ENCODE measurements at regions of chr12 and their contacts with region 1.

Region 1: DNA sequence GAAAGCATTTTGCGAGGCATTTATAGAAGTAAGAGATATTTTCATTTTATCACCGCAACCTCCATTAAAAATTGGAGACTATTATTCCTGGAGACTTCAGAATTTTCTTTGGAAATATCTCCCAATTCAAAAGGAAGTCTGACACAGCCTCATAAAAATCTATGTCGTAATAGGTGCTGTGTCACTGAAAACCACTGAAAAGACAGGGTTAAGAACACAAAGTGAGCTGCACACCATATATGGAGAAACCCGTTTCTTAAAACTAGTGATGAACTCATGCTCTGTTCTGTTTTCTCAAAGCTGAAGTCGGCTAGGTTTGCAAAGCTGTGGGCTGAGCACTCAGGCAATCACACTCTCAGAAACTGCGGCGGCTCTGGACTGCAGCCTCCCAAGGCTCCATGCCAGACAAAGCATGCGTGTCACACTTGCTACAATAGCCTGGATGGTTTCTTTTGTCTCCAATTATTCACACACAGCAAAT is at the start of gene GLIPR1:
- DNase-seq: peak; percentile 93
- H3K4me3 ChIP-seq: peak within 1 kb of the TSS; percentile 37 to 79 (median 47)
- H3K27ac ChIP-seq: peak within 1 kb of the TSS; percentile 80
- H3K4me1 ChIP-seq: peaks cover 29% of the 10 kb centered on the region
- H3K27me3 ChIP-seq: no peaks in the 10 kb centered on the region
- CTCF ChIP-seq: no peak
- POLR2A ChIP-seq: peak; percentile 96
- total RNA-seq, gene GLIPR1: 74.1 and 98.8 TPM in 2 replicates

Region 2: DNA sequence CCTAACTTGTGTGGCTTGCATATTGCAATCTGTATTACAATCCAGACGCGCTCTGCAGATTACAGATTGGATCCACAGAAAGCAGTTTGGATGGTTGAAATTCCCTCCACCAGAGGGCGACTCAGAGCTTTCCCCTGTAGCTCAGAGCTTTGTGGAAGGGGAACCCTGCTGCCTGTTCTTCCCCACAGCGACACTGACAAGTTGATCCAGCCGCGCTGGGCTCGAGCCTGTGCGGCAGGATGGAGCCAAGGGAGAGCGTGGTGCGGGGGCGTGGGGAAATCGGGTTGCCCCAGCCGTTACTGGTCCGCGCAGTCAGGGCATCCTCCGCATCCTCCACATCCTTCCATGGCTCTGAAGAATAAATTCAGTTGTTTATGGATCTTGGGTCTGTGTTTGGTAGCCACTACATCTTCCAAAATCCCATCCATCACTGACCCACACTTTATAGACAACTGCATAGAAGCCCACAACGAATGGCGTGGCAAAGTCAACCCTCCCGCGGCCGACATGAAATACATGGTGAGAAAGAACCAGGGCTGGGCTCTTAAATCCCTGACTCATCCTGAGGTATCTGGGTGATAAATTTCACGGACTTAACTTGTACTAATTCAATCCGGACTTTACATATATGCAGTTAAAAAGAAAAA is 146.0 kb before region 1 on chr12 and contains the start of gene GLIPR1L1:
- CTCF ChIA-PET with region 1: interaction called, 25 read pairs
- POLR2A ChIA-PET with region 1: no interaction called
- dilution Hi-C with region 1: no loop called
- intact Hi-C with region 1: loop called (anchors 1 kb)
- DNase-seq: peak; percentile 88
- H3K4me3 ChIP-seq: peak within 1 kb of the TSS; percentile 20 to 58 (median 56)
- H3K27ac ChIP-seq: no peak within 1 kb of the TSS
- H3K4me1 ChIP-seq: peaks cover 10% of the 10 kb centered on the region
- H3K27me3 ChIP-seq: peaks cover 2 to 13% of the 10 kb centered on the region in 2 experiments
- CTCF ChIP-seq: peak; percentile 85 to 91
- POLR2A ChIP-seq: no peak
- total RNA-seq, gene GLIPR1L1: not detected in 2 replicates

Region 3: GRCh38 chr12:75390899-75391538 is 89.5 kb before region 1 on chr12 and contains the start of gene GLIPR1L2:
- CTCF ChIA-PET with region 1: interaction called, 24 read pairs
- POLR2A ChIA-PET with region 1: interaction called, 7 read pairs
- dilution Hi-C with region 1: no loop called
- intact Hi-C with region 1: loop called (anchors 1 kb)
- DNase-seq: peak; percentile 98
- H3K4me3 ChIP-seq: peak within 1 kb of the TSS; percentile 2 to 63 (median 50)
- H3K27ac ChIP-seq: peak within 1 kb of the TSS; percentile 31
- H3K4me1 ChIP-seq: peaks cover 29% of the 10 kb centered on the region
- H3K27me3 ChIP-seq: no peaks in the 10 kb centered on the region
- CTCF ChIP-seq: peak; percentile 89 to 94
- POLR2A ChIP-seq: no peak
- total RNA-seq, gene GLIPR1L2: not detected in 2 replicates

Region 4: DNA sequence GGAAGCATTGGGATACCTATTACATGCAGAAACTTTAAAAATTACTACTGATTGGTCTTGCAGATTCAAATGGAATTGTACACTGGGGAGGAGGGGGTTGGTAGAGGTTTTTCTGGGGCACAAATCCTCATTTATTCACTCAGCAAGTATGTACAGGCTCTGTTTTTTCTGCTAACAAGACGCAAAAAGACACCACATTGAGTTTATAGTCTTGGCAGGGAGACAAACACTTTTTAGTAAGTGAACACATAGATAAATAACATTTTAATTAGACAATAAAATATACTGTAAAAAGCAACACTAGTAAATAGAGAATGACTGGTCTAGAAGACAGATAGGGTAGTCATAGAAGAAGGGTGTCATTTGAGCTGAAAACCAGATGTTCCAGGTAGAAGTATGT is 65.8 kb before region 1 on chr12:
- CTCF ChIA-PET with region 1: no interaction called
- POLR2A ChIA-PET with region 1: no interaction called
- dilution Hi-C with region 1: no loop called
- intact Hi-C with region 1: no loop called
- DNase-seq: no peak
- H3K4me3 ChIP-seq: no peak overlapping the region
- H3K27ac ChIP-seq: no peak overlapping the region
- H3K4me1 ChIP-seq: no peaks in the 10 kb centered on the region
- H3K27me3 ChIP-seq: peaks cover 0 to 2% of the 10 kb centered on the region in 2 experiments
- CTCF ChIP-seq: no peak
- POLR2A ChIP-seq: no peak

Region 5: GRCh38 chr12:75437564-75437963 is 42.9 kb before region 1 on chr12:
- CTCF ChIA-PET with region 1: interaction called, 17 read pairs
- POLR2A ChIA-PET with region 1: no interaction called
- dilution Hi-C with region 1: no loop called
- intact Hi-C with region 1: no loop called
- DNase-seq: peak; percentile 42
- H3K4me3 ChIP-seq: no peak overlapping the region
- H3K27ac ChIP-seq: no peak overlapping the region
- H3K4me1 ChIP-seq: no peaks in the 10 kb centered on the region
- H3K27me3 ChIP-seq: no peaks in the 10 kb centered on the region
- CTCF ChIP-seq: peak; percentile 16 to 39
- POLR2A ChIP-seq: no peak

Region 6: GRCh38 chr12:75446857-75447256 is 33.7 kb before region 1 on chr12:
- CTCF ChIA-PET with region 1: interaction called, 5 read pairs
- POLR2A ChIA-PET with region 1: interaction called, 4 read pairs
- dilution Hi-C with region 1: no loop called
- intact Hi-C with region 1: loop called (anchors 2 kb)
- DNase-seq: peak; percentile 52
- H3K4me3 ChIP-seq: no peak overlapping the region
- H3K27ac ChIP-seq: no peak overlapping the region
- H3K4me1 ChIP-seq: peaks cover 9% of the 10 kb centered on the region
- H3K27me3 ChIP-seq: no peaks in the 10 kb centered on the region
- CTCF ChIP-seq: no peak
- POLR2A ChIP-seq: no peak

Region 7: GRCh38 chr12:75505706-75506312 is 25.3 kb after region 1 on chr12:
- CTCF ChIA-PET with region 1: interaction called, 10 read pairs
- POLR2A ChIA-PET with region 1: interaction called, 4 read pairs
- dilution Hi-C with region 1: no loop called
- intact Hi-C with region 1: no loop called
- DNase-seq: peak; percentile 60
- H3K4me3 ChIP-seq: no peak overlapping the region
- H3K27ac ChIP-seq: no peak overlapping the region
- H3K4me1 ChIP-seq: peaks cover 8% of the 10 kb centered on the region
- H3K27me3 ChIP-seq: no peaks in the 10 kb centered on the region
- CTCF ChIP-seq: peak; percentile 32 to 50
- POLR2A ChIP-seq: peak; percentile 38

Region 8: DNA sequence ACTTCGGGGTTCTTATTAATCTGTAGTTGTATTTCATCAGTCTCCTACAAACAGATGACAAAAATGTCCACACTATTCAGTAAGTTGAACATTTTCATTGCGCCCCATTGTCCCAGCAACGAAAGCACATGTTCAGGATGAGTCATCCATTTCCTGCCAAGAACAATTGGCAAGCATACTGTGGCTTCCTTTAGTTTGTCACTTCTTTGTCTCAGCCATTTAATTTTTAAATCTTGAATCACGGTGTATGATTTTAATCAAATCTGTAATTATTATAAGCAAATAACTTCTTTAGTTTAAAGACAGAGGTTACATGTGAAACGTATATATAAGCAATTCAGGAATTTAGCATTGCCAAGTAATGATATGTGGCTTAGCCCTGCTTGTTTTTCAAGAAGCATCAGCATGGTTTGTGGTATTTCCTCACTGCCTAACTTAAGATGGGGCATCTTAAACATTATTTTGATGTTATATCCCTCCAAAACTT is 242.2 kb after region 1 on chr12:
- CTCF ChIA-PET with region 1: no interaction called
- POLR2A ChIA-PET with region 1: no interaction called
- dilution Hi-C with region 1: no loop called
- intact Hi-C with region 1: no loop called
- DNase-seq: peak; percentile 95
- H3K4me3 ChIP-seq: no peak overlapping the region
- H3K27ac ChIP-seq: peak overlapping the region; percentile 92
- H3K4me1 ChIP-seq: peaks cover 46% of the 10 kb centered on the region
- H3K27me3 ChIP-seq: no peaks in the 10 kb centered on the region
- CTCF ChIP-seq: no peak
- POLR2A ChIP-seq: no peak

Region 9: GRCh38 chr12:76586764-76587395 is 1106.4 kb after region 1 on chr12:
- CTCF ChIA-PET with region 1: interaction called, 9 read pairs
- POLR2A ChIA-PET with region 1: no interaction called
- dilution Hi-C with region 1: no loop called
- intact Hi-C with region 1: loop called (anchors 10 kb)
- DNase-seq: peak; percentile 49
- H3K4me3 ChIP-seq: no peak overlapping the region
- H3K27ac ChIP-seq: no peak overlapping the region
- H3K4me1 ChIP-seq: peaks cover 3% of the 10 kb centered on the region
- H3K27me3 ChIP-seq: no peaks in the 10 kb centered on the region
- CTCF ChIP-seq: peak; percentile 21 to 47
- POLR2A ChIP-seq: no peak